K562 (cell line): ENCODE measurements at regions of chr13 and their contacts with region 1.

Region 1: DNA sequence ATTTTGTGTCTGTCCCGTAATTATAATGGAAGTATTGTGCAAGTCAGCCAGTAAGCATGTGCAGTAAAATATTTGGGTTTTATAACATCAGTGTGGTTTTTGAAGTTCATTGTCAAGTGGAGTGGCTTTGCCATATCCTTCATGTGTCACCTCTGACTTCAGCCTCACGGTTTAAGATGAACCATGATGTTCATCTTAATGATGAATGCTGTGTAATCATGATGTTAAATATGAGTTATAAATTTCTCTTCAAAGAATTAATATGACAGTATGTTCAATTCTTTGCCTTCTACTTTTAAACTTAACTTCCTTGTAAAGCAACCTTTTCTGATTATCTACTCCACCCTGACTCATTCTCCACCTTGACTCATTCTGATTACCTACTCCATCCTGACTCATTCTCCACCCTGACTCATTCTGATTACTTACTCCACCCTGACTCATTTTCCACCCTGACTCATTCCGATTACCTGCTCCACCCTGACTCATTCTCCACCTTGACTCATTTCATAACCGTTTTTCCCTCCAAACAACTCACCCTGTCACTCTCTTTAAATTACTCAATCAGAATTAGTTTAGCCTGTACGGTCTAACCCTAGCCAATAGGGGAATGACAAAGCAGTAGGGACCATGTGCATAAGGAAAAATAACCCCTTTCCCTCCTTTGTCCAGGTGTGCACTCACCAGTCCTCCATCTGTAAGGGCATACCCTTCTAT is 50.3 kb upstream of the ANKRD10 start:
- DNase-seq: peak; percentile 25 to 92 (median 37)
- ATAC-seq: peak; percentile 88
- H3K4me3 ChIP-seq: peak overlapping the region; percentile 29
- H3K27ac ChIP-seq: peak overlapping the region; percentile 99
- H3K4me1 ChIP-seq: peaks cover 0 to 27% of the 10 kb centered on the region in 2 experiments; a peak in 3 of 5 replicates
- H3K27me3 ChIP-seq: no peaks in the 10 kb centered on the region
- CTCF ChIP-seq: no peak
- EP300 ChIP-seq: peak; percentile 97
- POLR2A ChIP-seq: peak; percentile 55; the same call in 1 of the 2 replicates
- RAD21 ChIP-seq: no peak; a peak in 1 of 4 replicates

Region 2: DNA sequence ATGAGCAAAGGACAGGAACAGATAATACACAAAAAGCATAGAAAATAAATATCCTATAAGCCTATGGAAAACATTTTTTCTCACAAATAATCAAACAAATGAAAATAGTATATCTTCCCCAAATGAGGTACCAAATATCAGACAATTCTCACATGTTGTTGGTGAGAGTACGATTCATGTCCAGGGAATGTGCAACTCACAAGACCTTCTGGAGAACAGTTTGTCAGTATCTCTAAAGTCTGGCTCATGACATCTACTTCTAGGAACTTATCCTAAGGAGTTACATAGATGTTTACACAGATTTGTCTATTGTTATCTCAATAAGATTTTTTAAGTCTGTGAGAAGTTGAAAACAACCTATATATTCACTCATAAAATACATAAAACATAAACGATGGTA is 69.6 kb after region 1 on chr13:
- CTCF ChIA-PET with region 1: no interaction called
- POLR2A ChIA-PET with region 1: no interaction called
- in situ Hi-C with region 1: no loop called
- intact Hi-C with region 1: loop called (anchors 5 kb)
- DNase-seq: no peak
- ATAC-seq: no peak
- H3K4me3 ChIP-seq: no peak overlapping the region
- H3K27ac ChIP-seq: no peak overlapping the region
- H3K4me1 ChIP-seq: peaks cover 12 to 18% of the 10 kb centered on the region in 2 experiments; a peak in 4 of 5 replicates
- H3K27me3 ChIP-seq: no peaks in the 10 kb centered on the region
- CTCF ChIP-seq: no peak
- EP300 ChIP-seq: no peak
- POLR2A ChIP-seq: no peak
- RAD21 ChIP-seq: no peak